ENCODE measurements at regions of chr1 and their contacts with region 1.

Region 1: GRCh38 chr1:206766251-206766856 is 4.2 kb upstream of the IL19 start:
- DNase-seq: no peak
- H3K4me3 ChIP-seq: no peak overlapping the region
- H3K27ac ChIP-seq: no peak overlapping the region
- H3K4me1 ChIP-seq: no peaks in the 10 kb centered on the region
- H3K27me3 ChIP-seq: peaks cover 4% of the 10 kb centered on the region
- CTCF ChIP-seq: no peak

Region 2: GRCh38 chr1:206537141-206537540 is 229.2 kb before region 1 on chr1:
- CTCF ChIA-PET with region 1: interaction called, 13 read pairs
- POLR2A ChIA-PET with region 1: no interaction called
- intact Hi-C with region 1: no loop called
- DNase-seq: no peak
- H3K4me3 ChIP-seq: no peak overlapping the region
- H3K27ac ChIP-seq: no peak overlapping the region
- H3K4me1 ChIP-seq: no peaks in the 10 kb centered on the region
- H3K27me3 ChIP-seq: no peaks in the 10 kb centered on the region
- CTCF ChIP-seq: no peak

Region 3: DNA sequence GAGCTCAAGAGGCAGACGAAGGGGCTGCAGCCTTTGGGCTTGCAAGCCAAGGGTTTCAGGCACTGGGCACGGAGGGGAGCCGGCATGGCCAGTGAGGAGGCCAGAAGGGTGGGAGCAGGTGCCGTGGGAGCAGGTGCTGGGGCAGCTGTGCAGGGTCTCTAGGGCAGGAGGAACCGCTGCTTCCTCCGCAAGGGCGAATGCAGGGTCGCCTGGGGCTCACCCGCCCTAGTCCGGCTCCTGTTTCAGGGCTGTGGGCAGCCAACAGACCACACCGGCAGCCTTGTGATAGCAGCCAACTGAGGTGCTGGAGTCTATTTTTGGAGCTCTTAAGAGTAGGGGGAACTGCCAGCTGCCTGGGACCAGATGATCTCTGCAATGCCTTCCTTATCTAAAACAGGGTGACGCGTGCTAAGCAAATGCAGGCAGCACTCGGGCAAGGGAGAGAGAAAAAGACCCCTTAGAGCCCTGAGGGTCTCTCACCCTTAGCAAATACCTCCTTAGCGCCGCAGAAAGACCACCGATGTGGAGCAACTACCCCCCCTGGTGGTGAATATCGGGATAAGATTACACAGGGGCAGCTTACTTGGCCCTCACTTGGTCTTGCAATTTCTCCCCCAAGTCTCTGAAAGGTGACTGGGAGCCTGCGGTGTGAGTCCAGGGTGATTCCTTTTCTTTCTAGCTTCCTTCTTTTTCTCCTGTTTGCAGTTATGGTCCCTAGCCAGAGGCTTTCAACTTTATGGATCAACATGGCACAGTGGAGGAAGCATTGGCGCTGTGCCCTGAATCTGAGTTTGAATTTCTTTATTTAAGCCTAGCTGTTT is 102.3 kb before region 1 on chr1:
- CTCF ChIA-PET with region 1: no interaction called
- POLR2A ChIA-PET with region 1: no interaction called
- intact Hi-C with region 1: no loop called
- DNase-seq: peak; percentile 79
- H3K4me3 ChIP-seq: peak overlapping the region; percentile 25
- H3K27ac ChIP-seq: no peak overlapping the region
- H3K4me1 ChIP-seq: peaks cover 9% of the 10 kb centered on the region
- H3K27me3 ChIP-seq: peaks cover 14% of the 10 kb centered on the region
- CTCF ChIP-seq: peak; percentile 81

Measured in A673 (cell line).